ENCODE measurements at regions of chr17 and their contacts with region 1.

Region 1: GRCh38 chr17:1724506-1725362 is at the start of gene WDR81:
- DNase-seq: peak; percentile 92 to 97 (median 96)
- ATAC-seq: peak; percentile 88
- H3K4me3 ChIP-seq: peak within 1 kb of the TSS; percentile 82
- H3K4me1 ChIP-seq: peaks cover 33% of the 10 kb centered on the region
- CTCF ChIP-seq: no peak
- total RNA-seq, gene WDR81: 17.3 to 27.3 (median 22.4) TPM

Region 2: GRCh38 chr17:1783834-1784611 is 59.3 kb after region 1 on chr17:
- intact Hi-C with region 1: loop called in 1 of 2 experiments (anchors 5 kb)
- DNase-seq: peak in 2 of 3 donors; percentile 68 to 74
- ATAC-seq: peak; percentile 40
- H3K4me3 ChIP-seq: no peak overlapping the region
- H3K4me1 ChIP-seq: peaks cover 21% of the 10 kb centered on the region
- CTCF ChIP-seq: peak; percentile 28